A549 (cell line): ENCODE measurements at regions of chr2 and their contacts with region 1.

Region 1: DNA sequence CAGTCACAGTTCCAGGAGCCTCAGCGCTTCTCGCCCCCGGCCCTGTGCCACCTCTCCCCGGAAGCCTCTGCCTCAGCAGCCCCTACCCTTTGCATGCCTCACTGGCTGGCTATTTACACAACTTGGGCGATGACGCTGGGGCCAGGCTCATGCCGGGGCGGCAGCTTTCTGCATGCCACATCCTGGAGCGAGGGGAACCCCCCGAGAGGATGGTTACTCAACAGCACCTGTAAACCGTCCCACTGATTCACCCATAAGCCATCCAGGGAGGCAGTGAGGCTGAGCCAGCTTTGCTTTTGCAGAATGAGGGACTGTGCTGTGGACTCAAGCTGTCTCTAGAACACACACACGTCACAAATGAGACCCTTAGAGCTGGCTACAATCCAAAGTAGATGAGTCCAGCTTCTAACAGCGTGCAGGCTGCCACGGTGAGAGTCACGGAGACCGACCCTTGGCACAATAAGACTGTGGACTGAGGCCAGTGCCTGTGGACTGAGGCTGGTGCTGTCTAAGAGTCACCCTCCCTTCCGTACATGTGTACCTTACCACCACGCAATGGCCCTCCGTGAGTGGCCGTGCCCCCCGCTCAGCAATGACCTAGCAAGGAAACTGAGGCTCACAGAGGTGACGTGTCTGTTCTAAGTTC is 45.6 kb upstream of the ODC1 start:
- DNase-seq: peak; percentile 93 to 95
- ATAC-seq: peak; percentile 86 to 87
- H3K4me3 ChIP-seq: 0 out of 3 replicates have a peak overlapping the region, but pooled peaks have one; percentile 7
- H3K27ac ChIP-seq: peak overlapping the region; percentile 71 to 83
- H3K4me1 ChIP-seq: peaks cover 57% of the 10 kb centered on the region
- CTCF ChIP-seq: no peak
- EP300 ChIP-seq: peak; percentile 94 to 98; a peak in 3 of 5 replicates
- POLR2A ChIP-seq: no peak
- RAD21 ChIP-seq: peak in 1 of 2 experiments; percentile 68; a peak in 3 of 5 replicates

Region 2: DNA sequence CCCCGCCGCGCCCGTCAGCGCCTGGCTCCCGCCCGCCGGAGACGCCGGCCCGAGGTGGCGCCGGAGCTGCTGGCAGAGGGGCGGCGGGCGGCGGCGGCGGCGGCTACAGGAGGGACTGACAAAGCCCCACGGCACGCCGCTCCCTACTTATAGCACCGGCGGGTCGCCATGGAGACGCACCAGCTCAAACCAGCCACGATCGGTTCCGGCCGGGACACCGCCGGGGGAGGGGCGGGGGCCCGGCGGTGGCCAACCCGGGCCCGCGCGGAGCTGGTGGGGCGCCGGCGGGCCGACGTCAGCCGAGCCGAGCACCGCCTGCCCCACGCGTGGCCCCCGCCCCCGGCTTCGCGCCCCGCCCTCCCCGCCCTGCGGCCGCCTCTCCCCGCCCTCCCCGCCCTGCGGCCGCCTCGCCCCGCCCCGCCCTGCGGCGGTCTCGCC is 45.5 kb before region 1 on chr2 and contains the start of gene ODC1:
- CTCF ChIA-PET with region 1: interaction called, 9 read pairs
- POLR2A ChIA-PET with region 1: interaction called, 17 read pairs
- DNase-seq: peak; percentile 80 to 93
- ATAC-seq: peak; percentile 69 to 72
- H3K4me3 ChIP-seq: peak within 1 kb of the TSS; percentile 78
- H3K27ac ChIP-seq: peak within 1 kb of the TSS; percentile 90 to 98
- H3K4me1 ChIP-seq: peaks cover 56% of the 10 kb centered on the region
- CTCF ChIP-seq: no peak
- EP300 ChIP-seq: no peak; a peak in 2 of 5 replicates
- POLR2A ChIP-seq: peak; percentile 59
- RAD21 ChIP-seq: no peak
- polyA plus RNA-seq, gene ODC1: 198 and 265 TPM in 2 replicates

Region 3: GRCh38 chr2:10584796-10585475 is 91.2 kb after region 1 on chr2:
- CTCF ChIA-PET with region 1: no interaction called
- POLR2A ChIA-PET with region 1: no interaction called
- DNase-seq: peak; percentile 90
- ATAC-seq: peak; percentile 95
- H3K4me3 ChIP-seq: no peak overlapping the region
- H3K27ac ChIP-seq: peak overlapping the region in 1 of 2 experiments; percentile 52; a peak in 3 of 6 replicates
- H3K4me1 ChIP-seq: peaks cover 26% of the 10 kb centered on the region
- CTCF ChIP-seq: no peak
- EP300 ChIP-seq: peak in 1 of 2 experiments; percentile 20; a peak in 1 of 5 replicates
- POLR2A ChIP-seq: no peak
- RAD21 ChIP-seq: peak in 1 of 2 experiments; percentile 14; a peak in 1 of 5 replicates